Calu3 (cell line): ENCODE measurements at regions of chr1 and their contacts with region 1.

Region 1: GRCh38 chr1:225777583-225778336 is at the start of gene SRP9:
- DNase-seq: peak; percentile 100
- H3K4me3 Mint-ChIP-seq: no peak within 1 kb of the TSS
- H3K27ac Mint-ChIP-seq: no peak within 1 kb of the TSS
- H3K4me1 Mint-ChIP-seq: peaks cover 41% of the 10 kb centered on the region
- H3K27me3 Mint-ChIP-seq: no peaks in the 10 kb centered on the region
- CTCF ChIP-seq: peak; percentile 83
- total RNA-seq, gene SRP9: 264 and 312 TPM in 2 replicates

Region 2: DNA sequence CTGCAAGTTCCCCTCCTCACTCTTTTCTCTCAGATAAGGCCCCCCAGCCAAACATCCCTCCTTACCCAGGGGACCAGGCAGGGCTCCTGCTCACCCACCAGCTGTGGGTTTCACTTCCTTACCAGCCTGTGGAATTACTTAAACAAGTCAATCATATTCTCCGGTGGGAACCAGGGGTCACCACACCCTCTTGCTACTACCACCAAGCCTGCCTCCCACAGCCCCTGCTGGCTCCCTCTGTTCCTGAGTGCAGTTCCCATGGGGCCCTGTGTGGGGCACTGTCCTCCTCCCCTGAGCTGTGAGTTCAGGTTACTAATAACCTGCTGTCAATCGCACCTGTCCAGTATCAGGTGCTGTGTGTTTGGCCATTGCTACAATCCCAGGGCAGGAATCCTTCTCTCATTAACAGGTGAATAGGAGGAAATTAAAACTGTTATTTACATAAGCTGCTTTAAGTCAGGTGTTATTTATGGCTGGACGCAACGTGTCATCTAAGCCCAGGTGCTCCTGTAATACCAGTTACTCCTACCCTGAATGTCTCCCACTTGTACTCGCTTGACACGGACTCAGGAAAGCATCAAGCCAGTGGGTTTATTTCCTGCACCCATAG is 296.8 kb before region 1 on chr1:
- CTCF ChIA-PET with region 1: interaction called, 12 read pairs
- intact Hi-C with region 1: loop called (anchors 1 kb)
- DNase-seq: peak; percentile 89
- H3K4me3 Mint-ChIP-seq: no peak overlapping the region
- H3K27ac Mint-ChIP-seq: no peak overlapping the region
- H3K4me1 Mint-ChIP-seq: peaks cover 15% of the 10 kb centered on the region
- H3K27me3 Mint-ChIP-seq: no peaks in the 10 kb centered on the region
- CTCF ChIP-seq: peak; percentile 96

Region 3: DNA sequence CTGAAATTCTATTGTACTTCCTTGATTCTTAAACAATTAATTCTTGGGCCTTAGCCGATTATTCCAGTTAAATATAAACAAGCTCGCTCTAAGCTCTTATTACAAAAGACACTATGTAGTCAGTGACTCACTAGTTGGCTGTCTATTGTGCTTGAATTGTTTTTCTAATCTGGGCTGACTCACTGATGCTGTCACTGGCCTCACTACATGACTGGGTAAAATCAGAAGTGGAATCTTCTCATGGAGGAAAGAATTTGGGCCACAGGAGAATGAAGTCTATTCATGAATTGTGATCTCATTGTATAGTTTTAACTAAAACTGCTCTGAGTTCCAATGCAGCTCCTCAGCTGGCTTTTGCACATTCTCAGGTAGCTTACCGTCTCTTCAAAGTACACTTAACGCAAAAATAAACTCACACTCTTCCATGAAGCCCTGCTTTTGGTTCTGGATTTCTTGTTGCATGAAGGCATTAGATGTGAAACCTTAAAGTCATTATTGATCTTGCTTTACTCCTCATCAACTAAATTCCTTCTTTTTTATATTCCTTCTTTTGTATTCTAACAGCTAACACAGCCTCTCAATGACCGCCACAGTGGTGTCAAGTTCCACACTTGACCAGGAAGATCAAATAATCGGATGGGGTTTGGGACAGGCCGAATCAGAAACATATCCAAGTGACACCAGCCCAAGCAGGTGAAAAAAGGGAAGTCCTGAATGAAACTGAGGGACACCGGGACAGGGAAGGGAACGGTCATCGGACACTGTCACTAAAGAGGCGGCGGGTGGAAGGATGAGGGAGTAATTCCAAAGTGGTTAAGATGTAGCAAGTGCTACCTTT is 269.0 kb before region 1 on chr1:
- CTCF ChIA-PET with region 1: interaction called, 22 read pairs
- intact Hi-C with region 1: no loop called
- DNase-seq: peak; percentile 63
- H3K4me3 Mint-ChIP-seq: peak overlapping the region; percentile 27
- H3K27ac Mint-ChIP-seq: peak overlapping the region; percentile 91
- H3K4me1 Mint-ChIP-seq: peaks cover 22% of the 10 kb centered on the region
- H3K27me3 Mint-ChIP-seq: no peaks in the 10 kb centered on the region
- CTCF ChIP-seq: no peak

Region 4: DNA sequence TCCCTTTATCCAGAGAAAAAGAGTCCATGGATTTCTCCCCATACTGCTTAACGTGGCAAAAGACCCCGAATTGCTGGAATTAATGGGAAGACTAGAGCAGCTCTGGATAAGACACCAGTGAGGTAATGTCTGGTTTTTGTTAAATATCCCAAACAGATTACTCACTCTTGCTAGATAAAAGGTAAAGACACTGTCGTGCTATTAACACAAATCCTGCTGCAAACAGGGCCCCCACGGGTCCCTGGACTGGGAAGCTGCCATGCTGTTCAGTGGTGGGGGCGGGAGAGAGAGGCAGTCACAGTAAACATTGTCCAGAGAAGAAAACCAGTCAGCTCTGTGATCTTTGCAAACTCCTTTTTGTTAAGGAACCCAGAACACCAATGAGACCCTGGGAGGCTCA is 15.3 kb before region 1 on chr1:
- CTCF ChIA-PET with region 1: interaction called, 18 read pairs
- intact Hi-C with region 1: no loop called
- DNase-seq: no peak
- H3K4me3 Mint-ChIP-seq: no peak overlapping the region
- H3K27ac Mint-ChIP-seq: no peak overlapping the region
- H3K4me1 Mint-ChIP-seq: peaks cover 11% of the 10 kb centered on the region
- H3K27me3 Mint-ChIP-seq: no peaks in the 10 kb centered on the region
- CTCF ChIP-seq: no peak

Region 5: DNA sequence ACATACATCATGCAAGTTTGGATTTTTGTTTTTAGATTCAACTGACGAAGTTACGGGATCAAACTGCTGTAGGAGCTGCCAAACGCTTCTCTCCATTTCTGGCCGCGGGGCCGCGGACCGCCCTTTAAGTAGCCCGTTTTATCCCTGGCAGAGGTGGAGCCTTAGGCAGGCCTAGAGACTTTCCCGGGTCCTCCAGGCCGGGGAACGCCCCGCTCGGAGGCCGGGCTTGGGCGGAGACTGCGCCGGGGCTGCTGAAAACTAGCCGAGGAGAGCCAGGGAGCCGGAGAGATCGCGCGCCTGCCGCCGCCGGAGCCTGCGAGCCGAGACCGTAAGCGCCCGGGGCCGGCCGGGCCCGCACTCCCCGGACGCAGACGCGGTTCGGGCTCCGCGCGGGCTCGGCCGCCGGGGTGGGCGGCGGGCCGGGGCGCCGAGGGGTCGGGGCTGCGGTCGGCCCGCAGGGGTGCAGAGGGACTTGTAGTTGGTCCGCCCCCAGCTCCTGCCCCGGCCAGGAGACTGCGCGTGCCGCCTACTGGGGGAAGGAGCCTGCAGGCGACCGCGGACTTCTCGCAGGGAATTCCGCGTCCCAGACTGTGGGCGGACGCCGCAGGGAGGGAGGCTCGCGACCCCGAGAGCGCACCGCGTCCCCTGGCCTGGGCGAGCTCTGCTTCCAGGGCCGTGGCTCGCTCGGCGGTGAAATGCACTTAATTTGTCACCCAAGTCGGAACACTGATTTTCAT is 32.2 kb after region 1 on chr1 and contains the start of gene EPHX1:
- CTCF ChIA-PET with region 1: interaction called, 7 read pairs
- intact Hi-C with region 1: loop called (anchors 2 kb)
- DNase-seq: peak; percentile 95
- H3K4me3 Mint-ChIP-seq: peak within 1 kb of the TSS; percentile 82
- H3K27ac Mint-ChIP-seq: peak within 1 kb of the TSS; percentile 67
- H3K4me1 Mint-ChIP-seq: peaks cover 16% of the 10 kb centered on the region
- H3K27me3 Mint-ChIP-seq: no peaks in the 10 kb centered on the region
- CTCF ChIP-seq: peak; percentile 28
- total RNA-seq, gene EPHX1: 32.5 and 46.6 TPM in 2 replicates

Region 6: GRCh38 chr1:225977937-225978748 is 200.4 kb after region 1 on chr1:
- CTCF ChIA-PET with region 1: no interaction called
- intact Hi-C with region 1: loop called (anchors 10 kb)
- DNase-seq: no peak
- H3K4me3 Mint-ChIP-seq: no peak overlapping the region
- H3K27ac Mint-ChIP-seq: no peak overlapping the region
- H3K4me1 Mint-ChIP-seq: no peaks in the 10 kb centered on the region
- H3K27me3 Mint-ChIP-seq: no peaks in the 10 kb centered on the region
- CTCF ChIP-seq: no peak